Left cardiac atrium (tissue), 4 donors: ENCODE measurements at regions of chr12 and their contacts with region 1.

Region 1: DNA sequence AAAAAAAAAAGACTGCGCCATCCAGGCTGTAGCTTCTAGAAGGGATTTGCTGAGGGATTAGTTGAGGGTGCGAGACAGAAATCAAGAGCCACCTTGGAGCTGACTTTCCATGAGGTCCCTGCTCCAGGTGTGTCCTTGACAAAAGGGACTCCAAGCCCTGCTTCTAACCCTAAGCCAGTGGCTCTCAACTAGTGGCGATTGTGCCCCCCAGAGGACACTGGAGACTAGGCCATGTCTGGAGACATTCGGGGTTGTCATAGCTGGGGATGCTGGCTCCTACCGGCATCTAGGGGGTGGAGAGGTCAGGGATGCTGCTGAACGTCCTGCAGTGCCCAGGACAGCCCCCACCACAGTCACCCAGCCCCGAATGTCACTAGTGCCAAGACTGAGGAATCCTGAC is 40.6 kb downstream of the SPRING1 start:
- DNase-seq: no peak
- ATAC-seq: peak; percentile 7 to 29

Region 2: DNA sequence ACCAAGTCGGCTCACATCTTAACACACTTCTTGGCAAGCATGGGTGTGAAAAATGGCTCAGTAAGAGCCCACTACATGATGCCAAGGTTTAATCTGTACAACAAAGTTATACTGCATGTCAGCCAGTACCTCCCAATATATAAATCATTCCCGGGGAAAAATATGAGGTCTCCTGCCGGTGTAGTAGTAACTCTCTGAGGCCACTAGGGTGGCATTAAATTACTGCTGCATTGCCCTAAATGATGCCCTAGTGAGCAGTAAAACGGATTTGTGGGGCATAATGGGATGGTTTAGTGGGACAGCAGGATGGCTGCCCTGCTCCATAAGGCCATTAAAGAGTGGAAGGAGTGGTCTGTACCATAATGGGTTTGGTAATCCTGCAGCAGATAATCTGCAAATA is 687.5 kb before region 1 on chr12:
- intact Hi-C with region 1: loop called in 1 of 2 experiments (anchors 5 kb)
- DNase-seq: no peak
- ATAC-seq: no peak

Region 3: GRCh38 chr12:116582610-116583009 is 114.7 kb before region 1 on chr12:
- intact Hi-C with region 1: no loop called
- DNase-seq: peak; percentile 66
- ATAC-seq: peak; percentile 95 to 96